ENCODE measurements at regions of chr14 and their contacts with region 1.

Region 1: DNA sequence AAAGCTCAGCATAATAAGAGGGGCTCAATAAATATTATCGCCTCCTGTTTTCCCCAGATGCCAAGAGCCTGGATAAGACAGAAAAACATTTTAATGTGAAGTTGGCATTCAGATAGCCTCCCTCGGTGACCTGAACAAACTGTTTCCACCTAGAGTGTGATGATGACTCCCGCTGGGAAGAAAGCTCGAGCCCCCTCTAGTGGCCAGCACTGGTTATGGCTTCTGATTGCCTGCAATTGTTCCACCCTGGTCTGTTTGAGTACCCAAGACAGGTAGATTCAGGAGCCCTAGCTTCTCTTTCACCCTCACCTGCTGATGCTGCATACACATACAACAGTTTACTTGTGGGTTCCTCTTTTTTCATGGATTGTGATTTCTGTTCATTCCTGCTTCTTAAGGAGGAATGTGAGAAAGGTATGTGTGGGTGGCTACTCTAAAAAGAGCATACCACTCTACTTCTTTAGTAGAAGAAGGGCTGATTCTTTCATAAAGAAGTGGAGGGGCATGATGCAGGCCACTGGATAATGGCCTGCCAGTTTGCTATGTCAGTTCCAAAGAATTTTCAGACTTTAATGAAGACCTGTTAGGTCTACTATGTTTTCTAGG is 6.4 kb downstream of the ERG28 start:
- DNase-seq: peak; percentile 74
- H3K4me3 Mint-ChIP-seq: no peak overlapping the region
- H3K27ac Mint-ChIP-seq: no peak overlapping the region
- H3K4me1 Mint-ChIP-seq: peaks cover 20% of the 10 kb centered on the region
- H3K27me3 Mint-ChIP-seq: no peaks in the 10 kb centered on the region

Region 2: GRCh38 chr14:75577729-75578101 is 76.5 kb before region 1 on chr14:
- intact Hi-C with region 1: loop called (anchors 1 kb)
- DNase-seq: peak; percentile 61
- H3K4me3 Mint-ChIP-seq: peak overlapping the region; percentile 83
- H3K27ac Mint-ChIP-seq: peak overlapping the region; percentile 71
- H3K4me1 Mint-ChIP-seq: peaks cover 22% of the 10 kb centered on the region
- H3K27me3 Mint-ChIP-seq: peaks cover 7% of the 10 kb centered on the region